CD8-positive, alpha-beta memory T cell (primary cell): ENCODE measurements at regions of chr7 and their contacts with region 1.

Region 1: DNA sequence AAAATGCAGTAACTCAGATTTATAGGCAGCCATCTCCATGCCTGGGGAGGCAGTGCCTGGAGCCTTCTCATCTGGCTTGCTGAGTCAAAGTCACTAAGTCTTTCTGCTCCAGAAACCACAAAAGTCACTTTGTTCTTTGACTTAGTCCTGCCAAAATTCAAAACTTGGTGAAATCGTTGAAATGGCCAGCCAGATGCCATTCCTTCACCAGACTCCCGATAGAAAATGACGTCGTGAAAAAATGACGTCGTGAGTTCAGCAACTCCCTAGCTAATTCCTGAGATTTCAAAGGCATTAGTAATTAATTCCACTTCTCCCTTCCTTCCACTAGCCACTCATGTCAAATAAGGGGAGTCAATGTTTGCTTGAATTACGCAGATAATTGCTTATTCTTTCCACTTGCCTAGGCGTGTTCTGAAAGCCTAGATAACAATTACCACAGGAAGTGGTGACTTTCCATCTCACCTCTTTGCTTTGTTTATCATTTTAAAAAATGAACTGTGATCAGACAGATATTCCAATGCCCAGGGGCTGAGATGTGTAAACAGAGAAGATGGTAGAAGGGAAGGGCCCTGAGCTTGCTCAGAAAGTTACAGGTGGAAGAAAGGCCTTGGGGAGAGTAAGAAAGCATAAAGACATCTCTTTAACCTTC is 48.5 kb upstream of the OSBPL3 start:
- DNase-seq: peak in 3 of 5 donors; percentile 25 to 55 (median 51)
- H3K4me3 ChIP-seq: peak overlapping the region; percentile 35
- H3K4me3 Mint-ChIP-seq: peak overlapping the region; percentile 3 to 73 (median 61)
- H3K27ac ChIP-seq: peak overlapping the region; percentile 32
- H3K27ac Mint-ChIP-seq: peak overlapping the region; percentile 76 to 98 (median 87)
- H3K4me1 ChIP-seq: peaks cover 28% of the 10 kb centered on the region
- H3K4me1 Mint-ChIP-seq: peaks cover 47 to 77% (median 76%) of the 10 kb centered on the region in 3 donors
- H3K27me3 ChIP-seq: no peaks in the 10 kb centered on the region
- H3K27me3 Mint-ChIP-seq: peaks cover 0 to 2% of the 10 kb centered on the region in 2 donors

Region 2: GRCh38 chr7:24936121-24936824 is 92.2 kb before region 1 on chr7:
- CTCF ChIA-PET with region 1: no interaction called
- POLR2A ChIA-PET with region 1: no interaction called
- DNase-seq: no peak
- H3K4me3 ChIP-seq: no peak overlapping the region
- H3K4me3 Mint-ChIP-seq: peak overlapping the region in 2 of 7 donors; percentile 12 to 51
- H3K27ac ChIP-seq: no peak overlapping the region
- H3K27ac Mint-ChIP-seq: peak overlapping the region in 7 of 8 donors; percentile 1 to 84 (median 27)
- H3K4me1 ChIP-seq: no peaks in the 10 kb centered on the region
- H3K4me1 Mint-ChIP-seq: peaks cover 63 to 92% (median 92%) of the 10 kb centered on the region in 3 donors
- H3K27me3 ChIP-seq: no peaks in the 10 kb centered on the region
- H3K27me3 Mint-ChIP-seq: no peaks in the 10 kb centered on the region

Region 3: DNA sequence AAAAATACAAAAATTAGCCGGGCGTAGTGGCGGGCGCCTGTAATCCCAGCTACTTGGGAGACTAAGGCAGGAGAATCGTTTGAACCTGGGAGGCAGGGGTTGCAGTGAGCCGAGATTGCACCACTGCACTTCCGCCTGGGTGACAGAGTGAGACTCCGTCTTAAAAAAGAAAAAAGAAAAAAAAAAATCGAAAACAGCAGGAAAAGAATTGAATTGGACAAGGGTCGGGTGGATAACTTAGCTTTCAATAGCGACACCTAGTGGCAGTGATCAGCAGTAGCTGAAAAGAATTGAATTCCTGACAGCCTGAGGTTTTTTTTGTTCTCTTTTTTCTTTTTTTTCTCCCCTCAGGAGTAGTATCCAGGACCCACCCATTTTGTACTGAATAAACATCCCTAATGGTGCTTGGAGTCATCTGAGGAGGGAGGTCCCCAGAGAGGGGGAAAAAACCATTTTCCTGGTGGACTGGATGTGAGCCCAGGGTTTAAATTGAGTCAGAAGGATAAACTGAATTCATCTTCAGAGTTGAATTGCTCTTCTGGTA is 41.5 kb after region 1 on chr7:
- CTCF ChIA-PET with region 1: interaction called, 24 read pairs
- POLR2A ChIA-PET with region 1: no interaction called
- DNase-seq: peak; percentile 12 to 60 (median 49)
- H3K4me3 ChIP-seq: no peak overlapping the region
- H3K4me3 Mint-ChIP-seq: no peak overlapping the region
- H3K27ac ChIP-seq: no peak overlapping the region
- H3K27ac Mint-ChIP-seq: no peak overlapping the region
- H3K4me1 ChIP-seq: no peaks in the 10 kb centered on the region
- H3K4me1 Mint-ChIP-seq: peaks cover 2 to 11% (median 9%) of the 10 kb centered on the region in 3 donors
- H3K27me3 ChIP-seq: no peaks in the 10 kb centered on the region
- H3K27me3 Mint-ChIP-seq: no peaks in the 10 kb centered on the region